Sigmoid colon (tissue), 7 donors: ENCODE measurements at regions of chr1 and their contacts with region 1.

Region 1: DNA sequence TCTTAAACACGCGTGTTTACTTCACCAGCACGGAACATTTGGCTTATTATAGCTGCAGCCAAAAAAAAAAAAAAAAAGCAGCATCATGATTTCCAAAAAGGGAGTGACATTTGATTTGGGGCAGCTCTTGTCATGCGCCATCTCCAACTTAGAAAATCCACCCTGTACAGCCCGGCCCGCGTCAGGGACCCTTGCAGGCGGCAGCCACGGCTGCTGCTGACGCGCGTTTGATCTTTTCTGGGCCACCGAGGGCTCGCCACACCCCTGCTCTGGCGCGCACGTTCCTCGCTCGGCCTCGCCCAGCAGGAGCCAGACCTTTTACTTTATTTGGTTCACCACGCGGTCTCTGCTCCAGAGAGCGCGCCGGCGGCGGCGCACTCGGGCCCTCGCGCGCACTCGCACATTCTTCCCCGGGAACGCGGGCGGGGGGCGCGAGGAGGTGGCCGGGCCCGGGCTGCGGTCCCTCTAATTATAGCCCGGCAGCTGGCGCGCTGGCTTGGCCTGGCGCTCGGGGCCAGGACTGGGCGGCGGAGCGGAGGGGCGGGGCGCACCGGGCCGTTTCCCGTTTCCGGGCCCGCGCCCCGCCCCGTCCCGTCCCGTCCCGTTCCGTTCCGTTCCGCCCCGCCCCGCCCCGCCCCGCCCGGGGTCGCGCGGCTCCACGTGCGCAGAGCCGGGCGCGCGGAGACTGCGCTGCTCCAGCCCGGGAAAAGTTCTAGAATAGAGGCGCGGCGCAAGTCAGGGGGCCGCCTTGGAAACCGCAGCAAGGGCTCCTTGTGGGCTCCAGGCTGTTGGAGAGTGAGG is 10.2 kb downstream of the IRF2BP2 start:
- DNase-seq: peak; percentile 95
- H3K4me3 ChIP-seq: peak overlapping the region; percentile 36 to 51 (median 48)
- H3K27ac ChIP-seq: peak overlapping the region; percentile 97 to 100 (median 100)
- H3K4me1 ChIP-seq: peaks cover 0 to 61% (median 53%) of the 10 kb centered on the region in 4 donors
- H3K27me3 ChIP-seq: no peaks in the 10 kb centered on the region
- CTCF ChIP-seq: no peak
- EP300 ChIP-seq: peak; percentile 49 to 88 (median 86)
- POLR2A ChIP-seq: peak; percentile 53 to 64

Region 2: DNA sequence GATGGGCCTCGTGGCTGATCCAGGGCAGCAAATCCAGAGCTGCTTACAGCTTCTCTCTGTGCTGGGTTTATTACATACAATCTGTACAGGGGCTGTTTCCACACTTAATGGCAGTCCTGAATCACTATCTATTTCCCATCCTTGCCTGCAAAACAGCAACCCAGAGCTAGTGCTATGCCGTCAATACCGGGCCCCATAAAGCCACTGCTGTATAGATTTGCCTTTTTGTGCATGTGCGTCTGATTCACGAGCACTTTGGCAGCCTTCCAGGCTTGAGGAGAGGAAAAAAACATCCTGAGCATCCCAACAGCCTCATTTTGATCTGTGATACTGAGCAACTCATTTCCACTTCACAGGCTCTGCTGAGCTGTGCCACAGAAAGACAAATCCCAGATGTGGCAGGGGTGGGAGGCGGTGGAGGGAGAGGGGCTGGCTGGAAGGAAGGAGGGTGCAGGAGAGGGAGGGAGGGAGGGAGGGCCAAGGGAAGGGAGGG is 55.7 kb before region 1 on chr1:
- intact Hi-C with region 1: loop called (anchors 2 kb)
- DNase-seq: peak; percentile 95
- H3K4me3 ChIP-seq: no peak overlapping the region
- H3K27ac ChIP-seq: peak overlapping the region; percentile 88 to 99 (median 96)
- H3K4me1 ChIP-seq: peaks cover 0 to 74% (median 71%) of the 10 kb centered on the region in 4 donors
- H3K27me3 ChIP-seq: no peaks in the 10 kb centered on the region
- CTCF ChIP-seq: no peak
- EP300 ChIP-seq: peak; percentile 71 to 94 (median 80)
- POLR2A ChIP-seq: no peak

Region 3: GRCh38 chr1:234573711-234574299 is 26.0 kb before region 1 on chr1:
- intact Hi-C with region 1: no loop called
- DNase-seq: no peak
- H3K4me3 ChIP-seq: no peak overlapping the region
- H3K27ac ChIP-seq: peak overlapping the region in 1 of 4 donors; percentile 28
- H3K4me1 ChIP-seq: peaks cover 0 to 8% (median 3%) of the 10 kb centered on the region in 4 donors
- H3K27me3 ChIP-seq: no peaks in the 10 kb centered on the region
- CTCF ChIP-seq: no peak
- EP300 ChIP-seq: no peak
- POLR2A ChIP-seq: no peak

Region 4: DNA sequence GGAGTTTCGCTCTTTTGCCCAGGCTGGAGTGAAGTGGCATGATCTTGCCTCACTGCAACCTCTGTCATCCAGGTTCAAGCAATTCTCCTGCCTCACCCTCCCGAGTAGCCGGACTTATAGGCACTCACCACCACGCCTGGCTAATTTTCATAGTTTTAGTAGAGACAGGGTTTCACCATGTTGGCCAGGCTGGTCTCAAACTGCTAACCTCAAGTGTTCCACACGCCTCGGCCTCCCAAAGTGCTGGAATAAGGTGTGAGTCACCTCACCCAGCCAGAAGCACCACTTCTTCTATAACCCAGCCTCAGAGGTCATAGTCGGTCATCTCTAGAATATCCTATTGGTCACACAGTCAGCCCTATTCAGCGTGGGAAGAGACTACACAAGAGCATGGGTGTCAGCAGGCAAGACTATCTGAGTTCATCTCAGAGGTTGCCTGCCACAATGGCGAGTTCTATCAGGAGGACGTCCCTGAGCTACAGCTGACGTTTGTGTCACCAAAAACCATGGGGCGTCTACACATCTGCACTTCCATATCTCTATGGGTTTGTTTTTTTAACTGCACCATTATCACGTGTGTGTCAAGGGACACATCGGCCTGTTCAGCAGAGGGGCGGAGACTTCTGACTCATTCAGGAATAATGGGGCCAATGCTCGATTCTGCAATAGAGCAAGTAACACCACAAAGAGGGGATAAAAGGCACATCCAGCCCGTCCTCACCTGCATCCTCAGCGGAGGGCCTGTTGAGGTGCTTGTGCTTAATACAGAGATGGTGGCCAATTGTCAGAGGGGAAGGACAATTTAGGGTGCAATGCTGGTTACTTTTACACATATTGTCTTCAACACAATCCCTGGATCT is 266.4 kb after region 1 on chr1:
- intact Hi-C with region 1: no loop called
- DNase-seq: peak; percentile 86
- H3K4me3 ChIP-seq: no peak overlapping the region
- H3K27ac ChIP-seq: peak overlapping the region in 2 of 4 donors; percentile 63 to 76
- H3K4me1 ChIP-seq: peaks cover 0 to 45% (median 33%) of the 10 kb centered on the region in 4 donors
- H3K27me3 ChIP-seq: no peaks in the 10 kb centered on the region
- CTCF ChIP-seq: no peak
- EP300 ChIP-seq: no peak
- POLR2A ChIP-seq: no peak